AG04449 (cell line): ENCODE measurements at regions of chr7 and their contacts with region 1.

Region 1: GRCh38 chr7:116525913-116526861 is 1.4 kb downstream of the CAV1 start:
- DNase-seq: no peak
- H3K4me3 ChIP-seq: peak overlapping the region; percentile 99
- CTCF ChIP-seq: peak; percentile 77

Region 2: DNA sequence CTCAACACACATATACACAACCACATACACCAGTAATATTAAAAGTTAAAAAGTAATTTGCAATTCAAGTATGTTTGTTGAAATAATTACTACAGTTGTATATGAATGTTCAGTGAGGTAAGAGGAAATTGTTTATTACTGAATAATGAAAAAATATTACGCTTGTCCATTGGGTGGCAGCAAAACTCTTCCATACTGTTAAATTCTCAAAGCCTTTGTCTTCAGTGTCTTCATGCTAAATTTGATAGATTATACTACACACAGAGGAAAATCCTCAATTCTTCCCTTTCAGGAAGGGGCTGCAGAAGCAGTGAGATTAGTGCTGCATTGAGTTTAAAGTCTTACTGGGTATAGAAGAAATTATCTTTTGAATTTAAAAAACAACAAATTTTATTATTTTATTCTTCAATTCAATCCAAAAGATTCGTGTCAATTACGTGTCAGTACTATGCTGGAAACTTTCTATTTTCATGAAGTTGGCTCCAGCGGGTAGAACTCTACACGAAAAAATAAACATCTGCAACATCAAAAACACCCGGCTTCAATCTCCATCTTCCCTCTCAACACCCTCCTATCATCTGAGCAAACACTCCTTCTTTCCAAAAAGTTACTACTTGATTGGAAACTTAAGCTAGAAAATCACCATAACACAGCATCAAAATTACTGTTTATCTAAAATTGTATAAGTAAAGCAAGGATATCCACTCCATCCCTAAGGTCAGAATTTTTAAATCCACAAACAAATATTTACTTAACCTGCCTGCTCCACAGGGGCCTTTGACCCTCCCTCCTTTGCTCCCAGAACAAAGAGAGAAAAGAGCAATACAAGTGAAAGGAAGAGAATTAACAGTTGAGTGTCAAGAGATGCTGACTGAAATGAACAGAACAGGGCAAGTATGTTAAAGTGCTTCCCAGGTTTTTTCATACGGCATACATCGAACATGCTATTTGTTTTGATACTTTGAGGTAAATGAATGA is 352.8 kb before region 1 on chr7:
- CTCF ChIA-PET with region 1: interaction called, 13 read pairs
- POLR2A ChIA-PET with region 1: interaction called, 3 read pairs
- DNase-seq: no peak
- H3K4me3 ChIP-seq: no peak overlapping the region
- CTCF ChIP-seq: no peak

Region 3: DNA sequence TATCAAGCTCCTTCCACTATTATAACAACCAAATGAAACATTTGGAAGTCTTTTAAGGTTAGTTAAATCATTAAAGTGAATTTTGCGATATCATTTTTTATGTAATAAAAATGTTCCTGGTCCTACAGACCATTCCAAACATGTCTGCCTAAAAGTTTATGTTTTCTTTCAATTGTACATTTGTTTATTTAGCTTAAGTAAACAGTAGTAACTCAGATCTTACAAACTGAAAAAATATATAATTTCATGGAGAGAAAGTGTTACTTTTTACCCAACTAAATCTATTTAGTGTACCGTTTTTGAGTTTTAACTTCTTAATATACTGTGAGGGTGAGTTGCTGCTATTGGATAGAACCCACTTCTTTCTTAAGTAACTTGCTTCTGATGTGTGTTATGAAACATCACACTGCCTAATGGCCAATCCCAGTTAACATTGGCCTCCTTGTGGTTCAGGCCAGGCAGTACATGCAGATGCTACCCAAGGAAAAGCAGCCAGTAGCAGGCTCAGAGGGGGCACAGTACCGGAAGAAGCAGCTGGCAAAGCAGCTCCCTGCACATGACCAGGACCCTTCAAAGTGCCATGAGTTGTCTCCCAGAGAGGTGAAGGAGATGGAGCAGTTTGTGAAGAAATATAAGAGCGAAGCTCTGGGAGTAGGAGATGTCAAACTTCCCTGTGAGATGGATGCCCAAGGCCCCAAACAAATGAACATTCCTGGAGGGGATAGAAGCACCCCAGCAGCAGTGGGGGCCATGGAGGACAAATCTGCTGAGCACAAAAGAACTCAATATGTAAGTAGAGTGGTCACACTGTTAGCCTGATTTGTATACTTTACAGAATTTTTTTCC is 276.3 kb before region 1 on chr7:
- CTCF ChIA-PET with region 1: interaction called, 129 read pairs
- POLR2A ChIA-PET with region 1: no interaction called
- DNase-seq: no peak
- H3K4me3 ChIP-seq: no peak overlapping the region
- CTCF ChIP-seq: peak; percentile 58

Region 4: DNA sequence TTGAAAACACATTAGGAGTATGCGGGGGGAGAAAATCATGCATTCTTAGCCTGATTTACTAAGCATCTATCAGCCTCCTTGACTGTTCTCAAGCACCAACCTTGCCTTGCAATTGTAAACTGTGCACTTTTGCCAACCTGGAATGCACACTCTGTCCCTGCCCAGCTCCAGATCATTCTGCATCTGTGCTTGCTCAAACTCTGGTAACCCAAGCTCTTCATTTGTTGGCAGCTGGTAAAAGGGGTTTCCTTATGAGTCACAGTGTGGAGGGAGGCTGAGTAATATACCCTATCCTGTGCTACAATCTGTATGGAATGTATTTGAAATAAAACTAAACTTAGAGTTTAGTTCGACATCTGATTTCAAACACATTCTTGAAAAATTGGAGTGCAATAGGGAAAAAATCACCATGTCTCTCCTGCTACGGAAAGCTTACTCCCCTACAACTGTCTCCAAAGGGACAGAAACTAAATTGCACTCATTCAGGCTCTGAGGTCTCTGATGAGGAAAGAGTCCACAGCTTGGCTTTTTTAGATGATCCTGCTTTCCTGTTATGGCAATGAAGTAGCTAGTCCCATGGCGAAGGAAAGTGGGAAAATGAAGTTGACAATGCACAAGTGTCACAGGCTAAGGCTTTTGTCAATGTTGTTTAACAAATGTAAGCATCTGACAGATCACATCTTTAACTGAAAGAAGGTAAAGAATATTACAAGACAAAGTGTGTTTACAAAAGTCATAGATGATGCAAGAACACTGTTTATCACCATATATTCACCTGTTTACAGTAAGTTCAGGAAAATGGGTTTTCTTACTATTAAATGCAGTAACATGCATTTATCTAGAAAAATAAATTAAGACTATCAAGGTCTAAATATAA is 254.0 kb before region 1 on chr7:
- CTCF ChIA-PET with region 1: interaction called, 14 read pairs
- POLR2A ChIA-PET with region 1: interaction called, 16 read pairs
- DNase-seq: peak; percentile 85
- H3K4me3 ChIP-seq: peak overlapping the region; percentile 21
- CTCF ChIP-seq: no peak

Region 5: GRCh38 chr7:116499168-116500077 is 26.8 kb before region 1 on chr7 and contains the start of gene CAV2:
- CTCF ChIA-PET with region 1: interaction called, 17 read pairs
- POLR2A ChIA-PET with region 1: interaction called, 11 read pairs
- DNase-seq: no peak
- H3K4me3 ChIP-seq: peak within 1 kb of the TSS; percentile 67
- CTCF ChIP-seq: no peak

Region 6: GRCh38 chr7:116576350-116577319 is 50.4 kb after region 1 on chr7:
- CTCF ChIA-PET with region 1: interaction called, 15 read pairs
- POLR2A ChIA-PET with region 1: interaction called, 18 read pairs
- DNase-seq: peak; percentile 86
- H3K4me3 ChIP-seq: no peak overlapping the region
- CTCF ChIP-seq: no peak